ENCODE measurements at regions of chr16 and their contacts with region 1.

Region 1: DNA sequence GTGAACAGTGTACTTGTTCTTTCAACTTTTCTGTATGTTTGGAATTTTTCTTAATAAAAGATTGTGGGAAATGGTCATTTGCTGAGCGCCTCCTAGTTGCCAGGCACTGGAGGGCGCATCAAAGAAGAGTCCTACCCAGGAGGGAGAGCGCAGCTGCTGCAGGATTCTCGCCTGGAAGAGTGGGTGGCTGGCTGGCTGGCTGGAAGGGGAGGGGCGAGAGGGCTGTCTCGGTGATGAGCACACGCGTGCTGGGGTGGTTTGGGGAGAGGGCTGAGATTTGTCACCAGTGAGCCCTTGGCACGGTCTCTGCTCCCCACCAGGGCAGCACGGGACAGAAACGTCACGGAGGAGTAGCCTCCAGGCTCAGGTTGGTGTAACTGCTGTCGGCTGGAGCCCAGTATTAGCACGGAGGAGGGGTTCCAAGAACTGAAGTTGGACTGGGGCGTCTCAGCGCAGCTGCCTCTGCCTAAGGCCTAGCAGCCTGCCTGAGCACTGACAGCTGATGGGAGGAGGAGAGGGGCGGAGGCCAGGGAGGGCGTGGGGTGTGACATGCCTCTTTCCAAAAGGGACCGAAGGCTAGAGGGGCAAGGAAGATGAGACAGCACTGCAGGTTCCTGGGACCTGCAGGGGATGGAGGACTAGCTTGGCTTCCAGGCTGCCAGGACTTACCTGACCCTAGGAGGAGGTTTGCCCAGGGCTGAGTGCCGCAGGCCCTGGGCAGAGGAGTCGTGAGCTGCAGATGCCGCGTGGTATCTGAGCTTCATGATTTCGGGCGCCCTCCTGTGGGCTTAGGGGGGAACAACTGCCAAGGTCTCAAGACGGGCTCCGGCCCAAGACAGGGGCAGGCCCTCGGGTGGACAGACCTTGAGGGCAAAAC is 5.7 kb downstream of the LDHD start:
- DNase-seq: peak; percentile 88 to 91
- ATAC-seq: peak; percentile 45 to 83 (median 62)
- H3K4me3 ChIP-seq: peak overlapping the region in 8 of 10 donors; percentile 6 to 39 (median 26)
- H3K27ac ChIP-seq: peak overlapping the region; percentile 57 to 96 (median 86)
- H3K4me1 ChIP-seq: peaks cover 17 to 94% (median 81%) of the 10 kb centered on the region in 9 donors
- H3K27me3 ChIP-seq: peaks cover 0 to 15% (median 0%) of the 10 kb centered on the region in 7 donors
- CTCF ChIP-seq: peak; percentile 87 to 97 (median 93)

Region 2: DNA sequence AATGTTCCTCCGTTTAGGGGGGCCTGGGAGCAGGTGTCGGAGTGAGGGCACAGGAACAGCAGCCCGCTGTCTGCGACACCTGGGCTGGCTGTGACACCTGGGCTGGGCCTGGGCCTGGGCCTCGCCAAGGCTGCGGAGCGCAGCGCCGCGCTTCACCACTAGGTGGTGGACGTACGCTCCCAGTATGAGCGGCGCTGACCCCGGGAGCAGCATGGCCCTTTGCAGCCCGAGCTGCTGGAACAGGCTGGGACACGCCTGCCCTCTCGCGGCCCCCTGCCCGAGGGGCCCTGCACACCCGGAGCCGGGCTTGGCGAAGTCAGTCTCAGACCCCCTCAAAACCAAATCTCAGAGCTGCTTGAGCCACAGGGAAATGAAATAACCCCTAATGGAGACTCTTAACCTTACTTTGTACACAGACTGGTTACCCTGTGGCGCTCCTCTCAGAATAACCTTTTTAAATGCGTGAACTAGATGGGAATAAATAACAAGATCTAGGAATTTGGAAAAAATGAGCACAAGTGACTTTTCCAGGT is 297.7 kb before region 1 on chr16:
- intact Hi-C with region 1: loop called in 3 of 10 experiments (anchors 10 kb)
- DNase-seq: peak; percentile 47 to 74
- ATAC-seq: peak; percentile 94 to 99 (median 96)
- H3K4me3 ChIP-seq: no peak overlapping the region
- H3K27ac ChIP-seq: no peak overlapping the region
- H3K4me1 ChIP-seq: peaks cover 0 to 7% (median 3%) of the 10 kb centered on the region in 9 donors
- H3K27me3 ChIP-seq: no peaks in the 10 kb centered on the region
- CTCF ChIP-seq: peak; percentile 79 to 95 (median 90)

Region 3: GRCh38 chr16:74896389-74897240 is 214.3 kb before region 1 on chr16:
- intact Hi-C with region 1: loop called in 2 of 10 experiments (anchors 10 kb)
- DNase-seq: no peak
- ATAC-seq: peak in 5 of 8 donors; percentile 49 to 89 (median 59)
- H3K4me3 ChIP-seq: no peak overlapping the region
- H3K27ac ChIP-seq: no peak overlapping the region
- H3K4me1 ChIP-seq: peaks cover 0 to 27% (median 0%) of the 10 kb centered on the region in 9 donors
- H3K27me3 ChIP-seq: no peaks in the 10 kb centered on the region
- CTCF ChIP-seq: no peak

Region 4: DNA sequence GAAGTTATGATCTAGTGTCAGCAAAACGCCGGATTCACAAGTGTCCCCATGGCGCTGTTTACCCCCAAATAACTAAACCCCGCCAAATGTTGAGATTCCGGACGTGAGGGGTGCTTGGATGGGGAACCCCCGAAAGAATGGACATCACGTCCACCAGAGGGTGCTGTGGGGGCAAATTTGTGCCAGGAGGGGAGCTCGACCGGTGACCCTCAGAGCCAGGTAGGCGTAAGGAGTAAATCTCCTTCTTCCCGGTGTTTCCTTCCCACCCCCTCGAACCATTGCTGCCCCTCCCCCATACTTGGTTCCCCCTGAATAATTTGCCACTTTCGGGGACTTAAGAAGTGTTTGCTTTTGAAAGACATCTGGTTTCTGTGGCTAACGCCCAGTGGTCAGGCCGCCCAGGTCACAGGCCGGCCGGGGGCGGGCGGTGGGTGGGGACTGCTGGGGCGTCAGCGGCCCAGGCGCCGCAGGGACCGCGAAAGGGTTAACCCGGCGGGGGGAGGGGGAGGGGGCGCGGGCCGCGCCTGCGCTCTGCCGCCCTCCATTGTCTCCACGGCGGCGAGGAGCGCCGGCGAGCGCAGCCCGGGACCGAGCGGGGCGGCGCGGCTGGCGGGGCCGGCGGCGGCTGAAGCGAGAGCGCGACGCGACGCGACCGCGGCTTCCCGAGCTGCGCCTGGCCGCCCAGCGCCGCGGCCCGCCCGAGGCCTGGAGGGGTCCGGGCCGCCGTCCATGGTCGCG is 112.2 kb before region 1 on chr16 and contains the start of gene ZNRF1:
- intact Hi-C with region 1: loop called (anchors 1 to 2 kb)
- DNase-seq: peak; percentile 89 to 90
- ATAC-seq: peak; percentile 85 to 93 (median 90)
- H3K4me3 ChIP-seq: peak within 1 kb of the TSS; percentile 73 to 100 (median 93)
- H3K27ac ChIP-seq: peak within 1 kb of the TSS; percentile 46 to 93 (median 87)
- H3K4me1 ChIP-seq: peaks cover 0 to 45% (median 31%) of the 10 kb centered on the region in 9 donors
- H3K27me3 ChIP-seq: no peaks in the 10 kb centered on the region
- CTCF ChIP-seq: peak; percentile 55 to 93 (median 81)
- total RNA-seq, gene ZNRF1: 16.7 to 30.8 (median 21.5) TPM

Region 5: GRCh38 chr16:75053791-75054555 is 56.9 kb before region 1 on chr16:
- intact Hi-C with region 1: loop called in 2 of 10 experiments (anchors 5 to 10 kb)
- DNase-seq: peak; percentile 71
- ATAC-seq: peak; percentile 29 to 85 (median 68)
- H3K4me3 ChIP-seq: no peak overlapping the region
- H3K27ac ChIP-seq: peak overlapping the region in 9 of 10 donors; percentile 10 to 78 (median 49)
- H3K4me1 ChIP-seq: peaks cover 12 to 75% (median 26%) of the 10 kb centered on the region in 9 donors
- H3K27me3 ChIP-seq: no peaks in the 10 kb centered on the region
- CTCF ChIP-seq: no peak

Measured in heart right ventricle (tissue), 16 donors.